Left ventricle myocardium inferior (tissue), 1 donor: ENCODE measurements at regions of chr12 and their contacts with region 1.

Region 1: DNA sequence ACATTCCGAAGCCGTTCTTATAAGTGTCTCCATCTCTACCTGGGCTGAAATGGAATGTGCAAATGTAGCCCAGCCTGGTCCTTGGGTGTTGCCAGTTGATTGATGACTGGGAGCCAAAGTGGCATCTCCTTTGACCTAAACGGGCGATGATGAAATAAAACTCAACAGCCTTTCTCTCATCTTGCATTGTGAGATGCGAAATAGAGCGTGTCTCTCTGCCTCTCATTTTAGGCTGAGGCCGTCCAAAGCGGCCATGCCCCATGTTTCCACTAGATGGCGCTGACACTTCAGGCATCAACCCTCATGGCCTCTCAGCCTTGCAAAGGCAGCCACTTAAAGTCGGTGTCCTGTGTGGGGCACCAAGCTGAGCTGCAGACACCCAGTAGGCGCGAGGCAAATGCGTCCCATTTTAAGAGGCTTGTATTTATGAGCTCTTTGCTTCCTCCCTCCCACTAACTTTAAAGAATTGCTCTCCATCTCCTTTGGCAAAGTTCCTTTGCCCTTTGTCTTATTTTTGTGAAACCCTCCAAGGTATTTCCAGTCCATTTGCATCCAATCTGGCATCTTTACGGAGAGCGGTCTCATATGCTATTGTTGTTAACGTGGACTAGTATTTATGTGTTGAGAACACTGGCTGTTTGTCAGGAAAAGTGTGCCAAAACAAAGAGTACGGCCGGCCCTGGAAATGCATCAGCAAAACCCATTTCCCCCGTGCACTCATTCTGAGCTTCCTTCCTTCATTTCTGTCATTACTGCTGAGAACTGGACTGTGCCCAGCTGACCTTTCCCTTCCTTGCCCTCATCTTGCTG is 25.0 kb downstream of the GPRC5A start:
- DNase-seq: peak; percentile 84
- H3K4me3 ChIP-seq: peak overlapping the region; percentile 37
- H3K27ac ChIP-seq: peak overlapping the region; percentile 59
- H3K4me1 ChIP-seq: peaks cover 14% of the 10 kb centered on the region
- H3K27me3 ChIP-seq: peaks cover 21% of the 10 kb centered on the region
- CTCF ChIP-seq: peak; percentile 99

Region 2: DNA sequence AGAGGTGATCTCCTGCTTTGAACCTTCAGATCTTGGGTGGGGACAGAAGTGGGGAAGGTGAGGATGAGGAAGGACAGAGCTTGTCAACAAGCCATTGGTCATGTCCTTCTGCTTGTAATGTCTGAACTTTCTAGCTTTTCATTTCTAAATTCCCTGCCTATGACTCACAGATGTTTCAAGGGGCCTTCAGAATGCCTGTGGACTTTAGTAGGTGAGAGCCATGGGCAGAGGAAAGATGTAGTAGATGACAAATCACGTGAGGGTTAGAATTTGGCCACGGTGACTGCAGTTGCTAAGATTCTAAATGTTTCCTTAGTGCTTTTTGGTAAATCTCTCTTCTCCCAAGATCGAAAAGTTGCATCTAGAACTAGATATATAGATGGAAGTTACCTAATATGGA is 323.4 kb before region 1 on chr12:
- intact Hi-C with region 1: no loop called
- DNase-seq: no peak
- H3K4me3 ChIP-seq: no peak overlapping the region
- H3K27ac ChIP-seq: no peak overlapping the region
- H3K4me1 ChIP-seq: no peaks in the 10 kb centered on the region
- H3K27me3 ChIP-seq: no peaks in the 10 kb centered on the region
- CTCF ChIP-seq: no peak

Region 3: GRCh38 chr12:12964255-12964654 is 47.9 kb after region 1 on chr12:
- intact Hi-C with region 1: no loop called
- DNase-seq: no peak
- H3K4me3 ChIP-seq: no peak overlapping the region
- H3K27ac ChIP-seq: no peak overlapping the region
- H3K4me1 ChIP-seq: no peaks in the 10 kb centered on the region
- H3K27me3 ChIP-seq: no peaks in the 10 kb centered on the region
- CTCF ChIP-seq: no peak

Region 4: DNA sequence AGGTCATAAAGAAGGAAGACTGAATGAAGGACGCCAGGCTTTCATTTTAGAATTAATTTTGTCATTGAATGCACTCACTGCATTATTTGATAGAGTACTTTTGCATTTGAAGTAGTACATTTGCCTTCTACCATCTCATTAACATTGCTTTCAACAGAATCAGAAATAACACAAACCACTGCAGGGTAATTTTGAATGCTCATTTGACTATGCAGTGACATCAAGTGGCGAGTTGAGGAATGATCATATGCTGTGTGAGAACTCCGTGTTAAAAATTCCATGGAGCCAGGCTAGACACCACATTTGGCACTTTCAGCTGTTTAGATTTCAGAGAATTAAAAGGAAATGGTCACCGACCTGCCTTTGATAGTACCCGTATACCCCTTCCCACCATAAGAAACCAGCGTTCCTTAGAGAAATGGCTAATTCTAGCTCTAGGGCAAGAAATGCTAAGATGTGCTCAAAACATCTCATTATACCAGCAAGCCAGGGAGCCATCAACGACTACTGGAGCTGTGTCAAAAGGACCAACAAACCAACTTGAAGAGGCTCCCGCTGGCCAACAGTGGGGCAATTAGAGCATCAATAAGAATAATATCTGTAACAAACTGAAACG is 67.2 kb after region 1 on chr12:
- intact Hi-C with region 1: loop called (anchors 5 kb)
- DNase-seq: no peak
- H3K4me3 ChIP-seq: no peak overlapping the region
- H3K27ac ChIP-seq: no peak overlapping the region
- H3K4me1 ChIP-seq: peaks cover 23% of the 10 kb centered on the region
- H3K27me3 ChIP-seq: no peaks in the 10 kb centered on the region
- CTCF ChIP-seq: peak; percentile 73